ENCODE measurements at regions of chr11 and their contacts with region 1.

Region 1: DNA sequence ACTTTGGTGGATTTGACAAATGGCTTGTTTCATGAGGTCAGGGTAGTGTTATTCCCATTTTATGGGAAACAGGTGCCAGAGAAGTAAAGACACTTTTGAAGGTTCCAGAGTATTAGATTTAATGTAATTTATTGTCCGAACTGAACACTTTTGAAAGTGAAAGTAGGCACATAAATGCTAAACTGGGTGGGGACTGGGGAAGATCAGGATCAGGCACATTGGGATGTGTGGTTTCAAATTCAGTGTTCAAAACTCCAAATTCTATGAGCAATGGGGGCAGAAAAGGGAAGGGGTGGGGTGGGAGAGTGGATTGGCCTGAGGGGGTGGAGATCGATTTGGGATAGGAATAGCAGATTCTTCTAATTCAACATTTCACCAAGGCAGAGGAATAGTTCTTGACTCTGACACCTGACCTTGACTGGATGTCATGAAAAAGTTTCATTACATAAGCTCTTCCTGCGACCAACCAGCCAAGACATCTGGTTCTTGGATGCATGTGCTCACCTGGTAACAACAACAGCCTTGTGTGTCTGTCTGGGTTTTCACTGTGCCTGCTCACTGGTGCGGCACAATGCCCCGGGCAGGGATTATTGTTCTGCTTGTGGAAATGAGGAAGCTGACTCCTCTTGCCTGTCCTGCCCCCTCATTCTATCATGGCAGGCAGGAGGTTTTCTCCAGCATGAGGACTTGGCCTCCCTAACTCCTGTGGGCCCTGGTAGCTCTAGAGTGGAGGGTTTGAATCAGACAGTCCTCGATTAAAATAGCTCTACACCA is 10.8 kb downstream of the PPFIBP2 start:
- DNase-seq: no peak
- H3K4me3 Mint-ChIP-seq: no peak overlapping the region
- H3K27ac Mint-ChIP-seq: peak overlapping the region; percentile 66
- H3K4me1 Mint-ChIP-seq: peaks cover 67% of the 10 kb centered on the region
- H3K27me3 Mint-ChIP-seq: peaks cover 2% of the 10 kb centered on the region

Region 2: DNA sequence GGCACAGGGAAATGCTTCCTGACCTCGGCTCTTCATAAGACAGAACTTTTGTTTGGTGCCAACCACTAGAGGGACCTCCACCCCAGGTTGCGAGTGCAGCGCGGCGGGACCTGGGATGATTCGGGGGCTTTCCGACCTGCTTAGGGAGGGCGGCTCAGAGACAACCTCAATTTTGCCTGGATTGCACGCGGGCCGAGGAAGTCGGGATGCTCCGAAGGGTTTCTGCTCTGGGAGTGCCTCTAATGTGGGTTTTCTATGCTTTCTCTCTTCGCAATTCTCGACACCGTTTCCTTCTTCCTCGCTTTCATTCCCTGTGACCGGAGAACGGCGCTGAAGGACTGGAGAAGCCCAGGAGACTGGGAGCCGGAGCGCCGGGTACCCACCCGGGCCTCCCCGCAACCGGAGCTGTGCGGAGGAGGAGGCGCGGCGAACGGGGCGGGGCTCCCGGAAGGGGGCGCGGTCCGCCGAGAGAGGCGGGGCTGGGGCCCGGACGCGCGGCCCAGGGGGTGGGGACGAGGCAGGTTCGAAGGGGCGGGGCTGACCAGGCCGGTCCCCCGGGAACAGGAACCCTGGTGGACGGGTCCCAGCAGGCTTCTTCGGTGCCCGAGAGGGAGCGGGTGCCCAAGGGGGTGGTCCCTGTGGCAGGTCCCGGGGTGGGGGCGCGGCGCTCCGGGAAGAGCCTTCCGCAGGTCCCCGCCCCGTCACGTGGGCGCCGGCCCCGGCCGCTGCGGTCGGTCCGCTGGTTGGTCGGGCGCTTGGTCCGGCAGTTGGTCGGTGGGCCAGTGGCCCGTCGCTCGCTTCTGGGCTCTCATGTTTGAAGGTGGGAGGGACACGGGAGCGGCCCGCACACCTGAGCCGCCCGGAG is 11.2 kb before region 1 on chr11 and contains the start of gene PPFIBP2:
- CTCF ChIA-PET with region 1: interaction called, 12 read pairs
- POLR2A ChIA-PET with region 1: interaction called, 3 read pairs
- DNase-seq: peak; percentile 80
- H3K4me3 Mint-ChIP-seq: peak within 1 kb of the TSS; percentile 90
- H3K27ac Mint-ChIP-seq: peak within 1 kb of the TSS; percentile 91
- H3K4me1 Mint-ChIP-seq: peaks cover 55% of the 10 kb centered on the region
- H3K27me3 Mint-ChIP-seq: peaks cover 13% of the 10 kb centered on the region
- total RNA-seq, gene PPFIBP2: 33.1 to 34.7 TPM